Naive thymus-derived CD8-positive, alpha-beta T cell (primary cell): ENCODE measurements at regions of chr13 and their contacts with region 1.

Region 1: DNA sequence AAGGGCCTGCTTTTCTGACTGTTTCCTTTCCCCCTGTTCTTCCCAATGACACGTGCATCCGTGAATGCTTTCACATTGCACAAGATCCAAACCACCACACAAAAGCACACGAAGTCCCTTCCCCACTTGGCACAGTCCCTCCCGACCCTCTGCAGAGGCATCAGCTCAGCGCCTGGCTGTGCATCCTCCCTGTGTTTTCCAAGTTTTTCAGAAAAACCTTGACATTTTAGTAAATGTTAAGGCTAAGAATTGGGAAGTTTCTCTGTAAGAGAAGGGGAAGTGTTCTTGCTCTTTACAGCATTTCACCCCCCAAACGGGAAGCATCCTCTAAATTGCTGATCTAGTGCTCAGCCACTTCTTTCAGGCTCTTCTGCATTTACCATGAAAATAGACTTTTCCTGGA is 94.5 kb upstream of the TM9SF2 start:
- DNase-seq: peak in 1 of 10 donors; percentile 7
- ATAC-seq: no peak
- H3K4me3 Mint-ChIP-seq: peak overlapping the region in 3 of 10 donors; percentile 12 to 70 (median 41)
- H3K27ac Mint-ChIP-seq: peak overlapping the region in 7 of 10 donors; percentile 10 to 83 (median 50)
- H3K4me1 Mint-ChIP-seq: peaks cover 22 to 62% (median 32%) of the 10 kb centered on the region in 4 donors
- H3K27me3 Mint-ChIP-seq: no peaks in the 10 kb centered on the region

Region 2: GRCh38 chr13:99417201-99418102 is 10.7 kb after region 1 on chr13:
- POLR2A ChIA-PET with region 1: interaction called, 15 read pairs
- DNase-seq: peak in 7 of 10 donors; percentile 43 to 74 (median 58)
- ATAC-seq: peak; percentile 14 to 43
- H3K4me3 Mint-ChIP-seq: peak overlapping the region in 2 of 10 donors; percentile 42 to 44
- H3K27ac Mint-ChIP-seq: no peak overlapping the region
- H3K4me1 Mint-ChIP-seq: peaks cover 30 to 67% (median 35%) of the 10 kb centered on the region in 4 donors
- H3K27me3 Mint-ChIP-seq: no peaks in the 10 kb centered on the region

Region 3: DNA sequence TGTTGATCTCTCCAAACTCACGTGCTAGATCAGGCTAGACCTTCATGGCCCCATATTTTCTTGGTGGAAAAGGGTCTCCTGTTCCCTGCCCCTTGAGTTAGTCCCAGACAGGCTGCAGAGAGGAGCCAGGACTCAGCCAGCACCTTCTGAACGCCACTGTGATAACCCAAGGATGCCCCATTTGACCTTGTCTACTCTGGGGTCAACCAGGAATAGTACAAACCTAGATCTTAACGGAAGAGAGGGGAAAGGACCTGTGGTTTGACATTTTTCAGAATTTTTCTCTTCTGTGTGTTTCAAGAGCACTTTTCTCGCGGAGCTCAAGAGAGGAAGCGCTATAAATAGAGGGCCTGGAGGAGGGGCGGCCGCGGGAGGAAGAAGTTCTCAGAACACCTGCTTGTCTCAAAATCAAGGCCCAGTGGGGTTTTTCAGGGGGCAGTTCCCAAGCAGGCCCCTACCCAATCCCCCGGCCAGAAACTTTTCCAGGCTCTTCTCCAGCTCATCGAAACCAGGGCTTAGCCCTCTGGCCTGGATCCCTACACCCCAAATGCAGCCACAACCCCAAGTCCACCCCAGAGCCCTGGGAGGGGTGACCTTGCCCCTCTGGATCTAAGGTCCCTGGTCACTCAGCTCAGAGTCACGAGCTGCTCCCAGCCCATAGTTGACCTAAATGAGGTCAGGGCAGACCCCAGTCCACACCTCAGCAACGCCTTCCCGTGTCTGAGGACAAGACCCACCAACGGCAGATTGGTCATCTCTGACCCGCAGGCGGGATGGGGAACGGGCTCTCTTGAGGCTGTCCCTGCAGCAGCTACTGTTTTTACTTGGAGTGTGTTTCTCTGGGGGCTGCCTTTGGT is 18.9 kb after region 1 on chr13:
- POLR2A ChIA-PET with region 1: interaction called, 15 read pairs
- DNase-seq: peak in 9 of 10 donors; percentile 37 to 82 (median 50)
- ATAC-seq: peak; percentile 67 to 74
- H3K4me3 Mint-ChIP-seq: peak overlapping the region; percentile 56 to 83 (median 77)
- H3K27ac Mint-ChIP-seq: peak overlapping the region; percentile 88 to 98 (median 94)
- H3K4me1 Mint-ChIP-seq: peaks cover 41 to 66% (median 64%) of the 10 kb centered on the region in 4 donors
- H3K27me3 Mint-ChIP-seq: no peaks in the 10 kb centered on the region

Region 4: DNA sequence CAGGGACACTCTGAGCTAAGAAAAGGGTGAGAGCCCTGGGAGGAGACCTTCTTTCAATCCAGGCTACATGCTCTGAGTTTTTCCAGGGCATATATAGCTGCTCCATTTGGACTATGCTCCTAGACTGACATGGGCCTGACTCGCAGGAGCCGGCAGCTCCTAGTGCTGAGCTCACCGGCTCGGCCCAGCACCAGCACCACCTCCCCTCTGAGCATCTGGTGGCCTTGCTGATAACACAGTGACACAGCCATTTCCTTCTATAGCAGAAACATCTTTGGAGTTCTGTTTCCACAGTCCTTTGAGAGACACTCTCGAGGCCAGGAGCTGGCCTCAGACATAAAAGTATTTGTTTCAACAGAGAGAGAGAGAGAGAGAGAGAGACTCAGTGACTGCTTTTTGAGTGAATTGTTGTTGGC is 279.4 kb after region 1 on chr13:
- POLR2A ChIA-PET with region 1: no interaction called
- DNase-seq: no peak
- ATAC-seq: no peak
- H3K4me3 Mint-ChIP-seq: no peak overlapping the region
- H3K27ac Mint-ChIP-seq: peak overlapping the region in 2 of 10 donors; percentile 6 to 22
- H3K4me1 Mint-ChIP-seq: peaks cover 0 to 21% (median 5%) of the 10 kb centered on the region in 4 donors
- H3K27me3 Mint-ChIP-seq: no peaks in the 10 kb centered on the region